Caco-2 (cell line): ENCODE measurements at regions of chr14 and their contacts with region 1.

Region 1: GRCh38 chr14:73283608-73284379 is 46.5 kb downstream of the PAPLN start:
- DNase-seq: no peak
- H3K4me3 ChIP-seq: no peak overlapping the region
- H3K4me3 Mint-ChIP-seq: no peak overlapping the region
- H3K27ac Mint-ChIP-seq: no peak overlapping the region
- H3K4me1 ChIP-seq: no peaks in the 10 kb centered on the region
- H3K4me1 Mint-ChIP-seq: peaks cover 6% of the 10 kb centered on the region
- H3K27me3 ChIP-seq: no peaks in the 10 kb centered on the region
- H3K27me3 Mint-ChIP-seq: no peaks in the 10 kb centered on the region
- CTCF ChIP-seq: no peak

Region 2: DNA sequence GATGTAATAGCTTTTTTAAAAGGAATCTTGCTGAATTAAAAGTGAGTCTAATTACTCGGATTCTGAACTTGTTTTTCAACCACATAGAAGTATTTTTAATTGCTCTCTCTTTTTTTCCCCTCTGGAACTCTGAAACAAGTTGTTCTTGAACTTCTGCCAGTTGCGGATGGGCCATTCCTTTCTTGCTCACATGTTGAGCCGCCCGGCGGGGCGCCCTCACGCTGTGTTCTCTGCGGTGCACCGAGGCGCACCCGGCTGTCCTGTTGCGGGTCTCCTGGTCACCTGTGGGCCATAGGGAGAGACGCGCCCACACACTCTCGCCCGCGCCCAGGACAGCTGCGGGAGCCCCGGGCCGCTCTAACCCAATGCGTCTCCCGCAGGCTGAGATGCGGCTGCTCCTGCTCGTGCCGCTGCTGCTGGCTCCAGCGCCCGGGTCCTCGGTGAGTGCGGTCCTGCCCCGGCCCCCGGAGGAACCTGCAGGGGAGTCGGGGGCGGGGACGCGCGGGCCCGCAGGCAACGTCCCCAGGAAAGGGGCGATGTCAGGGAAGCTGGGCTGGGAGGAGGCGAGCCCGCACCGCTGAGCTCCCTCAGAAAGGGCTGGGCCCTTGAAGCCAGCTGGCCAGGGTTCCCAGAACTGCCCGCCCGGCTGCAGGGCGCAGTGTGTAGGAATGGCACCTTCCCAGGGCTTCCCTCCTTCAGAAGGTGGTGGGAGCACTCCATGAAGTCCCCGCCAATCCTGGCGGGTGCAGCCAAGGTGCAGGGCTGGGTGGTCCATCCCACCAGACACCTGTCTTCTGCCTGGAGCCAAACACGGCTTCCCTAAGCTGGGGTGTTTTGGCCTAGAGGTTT is 44.2 kb before region 1 on chr14:
- CTCF ChIA-PET with region 1: no interaction called
- POLR2A ChIA-PET with region 1: no interaction called
- intact Hi-C with region 1: loop called (anchors 5 kb)
- DNase-seq: no peak
- H3K4me3 ChIP-seq: no peak overlapping the region
- H3K4me3 Mint-ChIP-seq: no peak overlapping the region
- H3K27ac Mint-ChIP-seq: no peak overlapping the region
- H3K4me1 ChIP-seq: peaks cover 30% of the 10 kb centered on the region
- H3K4me1 Mint-ChIP-seq: peaks cover 15% of the 10 kb centered on the region
- H3K27me3 ChIP-seq: no peaks in the 10 kb centered on the region
- H3K27me3 Mint-ChIP-seq: no peaks in the 10 kb centered on the region
- CTCF ChIP-seq: no peak

Region 3: GRCh38 chr14:73311708-73312030 is 27.9 kb after region 1 on chr14:
- CTCF ChIA-PET with region 1: no interaction called
- POLR2A ChIA-PET with region 1: no interaction called
- intact Hi-C with region 1: no loop called
- DNase-seq: no peak
- H3K4me3 ChIP-seq: no peak overlapping the region
- H3K4me3 Mint-ChIP-seq: no peak overlapping the region
- H3K27ac Mint-ChIP-seq: no peak overlapping the region
- H3K4me1 ChIP-seq: peaks cover 13% of the 10 kb centered on the region
- H3K4me1 Mint-ChIP-seq: peaks cover 6% of the 10 kb centered on the region
- H3K27me3 ChIP-seq: no peaks in the 10 kb centered on the region
- H3K27me3 Mint-ChIP-seq: no peaks in the 10 kb centered on the region
- CTCF ChIP-seq: no peak

Region 4: GRCh38 chr14:73381380-73382013 is 97.7 kb after region 1 on chr14:
- CTCF ChIA-PET with region 1: no interaction called
- POLR2A ChIA-PET with region 1: no interaction called
- intact Hi-C with region 1: no loop called
- DNase-seq: no peak
- H3K4me3 ChIP-seq: no peak overlapping the region
- H3K4me3 Mint-ChIP-seq: no peak overlapping the region
- H3K27ac Mint-ChIP-seq: no peak overlapping the region
- H3K4me1 ChIP-seq: no peaks in the 10 kb centered on the region
- H3K4me1 Mint-ChIP-seq: peaks cover 9% of the 10 kb centered on the region
- H3K27me3 ChIP-seq: no peaks in the 10 kb centered on the region
- H3K27me3 Mint-ChIP-seq: no peaks in the 10 kb centered on the region
- CTCF ChIP-seq: no peak